ENCODE measurements at regions of chr1 and their contacts with region 1.

Region 1: GRCh38 chr1:145891587-145892485 is 6.2 kb upstream of the ANKRD35 start:
- DNase-seq: peak; percentile 98
- H3K4me3 ChIP-seq: peak overlapping the region; percentile 17 to 42 (median 34)
- H3K27ac ChIP-seq: peak overlapping the region; percentile 76 to 84 (median 80)
- H3K4me1 ChIP-seq: peaks cover 21 to 25% (median 23%) of the 10 kb centered on the region in 4 donors
- H3K27me3 ChIP-seq: no peaks in the 10 kb centered on the region
- CTCF ChIP-seq: peak; percentile 89 to 100 (median 99)
- EP300 ChIP-seq: no peak
- POLR2A ChIP-seq: no peak

Region 2: DNA sequence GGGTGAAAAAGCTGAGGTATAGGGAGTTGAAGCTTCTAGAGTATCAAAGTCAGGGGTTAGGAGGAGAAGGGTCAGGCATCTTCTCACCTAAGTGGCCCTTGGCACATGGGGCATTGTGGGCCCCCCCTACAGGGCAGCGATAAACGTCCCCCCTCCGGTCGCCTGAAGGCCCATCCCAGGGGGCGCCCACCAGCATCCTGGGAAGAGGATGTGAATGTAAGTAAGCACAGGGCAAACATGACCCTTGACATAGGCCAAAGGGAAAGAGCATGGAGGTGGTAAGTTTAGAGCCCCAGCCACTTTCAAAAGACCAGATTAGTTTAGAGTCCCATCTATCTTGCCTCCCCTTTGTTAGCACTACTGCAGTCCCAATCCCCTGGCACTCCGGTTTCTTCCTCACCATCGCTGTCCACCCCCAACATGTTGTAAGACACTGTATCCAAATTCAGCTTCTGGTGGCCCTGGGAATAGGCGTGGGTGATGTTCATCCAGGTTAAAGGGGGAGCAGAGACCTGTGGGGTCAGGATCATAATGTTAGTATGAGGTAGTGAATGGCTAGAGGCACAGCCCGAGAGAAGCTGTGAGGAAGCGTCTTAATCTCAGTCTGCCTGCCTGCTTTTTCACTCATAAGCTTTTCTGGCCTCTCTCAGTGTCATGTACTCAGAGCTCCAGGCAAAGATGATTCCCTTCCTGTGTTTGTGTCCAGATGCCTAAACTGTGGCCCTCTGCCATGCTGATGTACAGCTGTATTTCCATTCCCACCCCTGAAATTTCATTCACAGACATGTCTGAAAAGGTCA is 15.3 kb after region 1 on chr1:
- intact Hi-C with region 1: loop called (anchors 1 kb)
- DNase-seq: no peak
- H3K4me3 ChIP-seq: no peak overlapping the region
- H3K27ac ChIP-seq: no peak overlapping the region
- H3K4me1 ChIP-seq: peaks cover 5 to 22% (median 10%) of the 10 kb centered on the region in 4 donors
- H3K27me3 ChIP-seq: no peaks in the 10 kb centered on the region
- CTCF ChIP-seq: no peak
- EP300 ChIP-seq: no peak
- POLR2A ChIP-seq: no peak